GM12878 (cell line): ENCODE measurements at regions of chr9 and their contacts with region 1.

Region 1: GRCh38 chr9:82513242-82513751 is 524.7 kb downstream of the SPATA31D1 start:
- DNase-seq: no peak
- ATAC-seq: no peak
- H3K4me3 ChIP-seq: no peak overlapping the region
- H3K27ac ChIP-seq: no peak overlapping the region
- H3K4me1 ChIP-seq: no peaks in the 10 kb centered on the region
- H3K27me3 ChIP-seq: no peaks in the 10 kb centered on the region
- CTCF ChIP-seq: no peak
- EP300 ChIP-seq: no peak
- POLR2A ChIP-seq: no peak
- RAD21 ChIP-seq: no peak

Region 2: DNA sequence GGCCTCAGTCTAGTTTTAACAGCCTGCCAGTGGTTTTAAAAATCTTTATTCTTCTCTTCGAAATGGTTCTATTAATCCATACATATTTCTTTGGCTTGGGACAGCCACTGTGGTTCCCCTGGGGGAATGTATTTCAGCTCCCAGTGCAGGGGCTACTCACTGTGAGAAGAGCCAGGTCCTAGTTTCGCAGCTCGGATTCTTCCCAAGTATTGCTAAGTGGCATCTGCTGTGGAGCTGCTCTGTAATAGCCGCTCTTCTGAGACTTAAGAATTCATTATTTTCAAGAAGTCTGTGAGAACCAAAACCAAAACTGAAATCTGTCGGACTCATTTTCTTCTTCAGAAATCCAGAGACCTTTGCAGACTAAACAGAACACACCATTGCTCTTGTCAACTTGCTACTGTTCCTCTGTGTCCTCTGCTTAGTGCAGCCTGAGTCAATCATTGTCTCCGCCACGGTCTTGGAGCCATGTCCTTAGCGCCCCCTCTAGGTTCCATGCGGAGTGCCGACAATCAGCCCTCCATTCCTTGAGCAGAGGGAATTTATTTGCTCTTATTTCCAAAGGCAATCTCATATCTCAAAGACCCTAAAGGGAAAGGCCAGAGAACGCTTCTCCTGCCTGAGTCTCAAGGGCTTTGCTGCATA is 46.6 kb before region 1 on chr9:
- CTCF ChIA-PET with region 1: no interaction called
- POLR2A ChIA-PET with region 1: no interaction called
- RAD21 ChIA-PET with region 1: no interaction called
- SMC1A ChIA-PET with region 1: no interaction called
- in situ Hi-C with region 1: loop called (anchors 5 kb)
- intact Hi-C with region 1: no loop called
- DNase-seq: no peak
- ATAC-seq: no peak
- H3K4me3 ChIP-seq: no peak overlapping the region
- H3K27ac ChIP-seq: no peak overlapping the region
- H3K4me1 ChIP-seq: no peaks in the 10 kb centered on the region
- H3K27me3 ChIP-seq: no peaks in the 10 kb centered on the region
- CTCF ChIP-seq: no peak
- EP300 ChIP-seq: no peak
- POLR2A ChIP-seq: no peak
- RAD21 ChIP-seq: peak; percentile 28

Region 3: DNA sequence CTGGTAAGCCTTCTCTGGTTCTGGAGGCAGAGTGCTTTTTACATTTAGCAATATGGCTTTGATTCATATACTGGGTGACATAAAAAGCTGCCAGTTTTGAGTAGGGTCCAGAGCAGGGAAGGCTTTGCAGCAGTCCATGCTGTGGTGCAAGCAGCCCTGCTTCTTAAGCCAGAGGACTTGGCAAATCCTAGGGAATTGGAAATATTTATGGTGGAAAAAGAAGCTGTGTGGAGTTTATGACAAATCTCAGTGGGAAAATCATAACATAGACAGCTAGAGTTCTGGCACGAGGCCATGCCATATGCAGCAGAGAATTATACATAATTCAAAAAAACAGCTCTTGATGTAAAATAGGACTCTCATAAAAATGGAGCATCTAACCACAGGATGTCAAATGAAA is 13.3 kb after region 1 on chr9:
- CTCF ChIA-PET with region 1: no interaction called
- POLR2A ChIA-PET with region 1: no interaction called
- RAD21 ChIA-PET with region 1: no interaction called
- SMC1A ChIA-PET with region 1: no interaction called
- in situ Hi-C with region 1: no loop called
- intact Hi-C with region 1: no loop called
- DNase-seq: no peak
- ATAC-seq: no peak
- H3K4me3 ChIP-seq: no peak overlapping the region
- H3K27ac ChIP-seq: no peak overlapping the region
- H3K4me1 ChIP-seq: no peaks in the 10 kb centered on the region
- H3K27me3 ChIP-seq: no peaks in the 10 kb centered on the region
- CTCF ChIP-seq: no peak
- EP300 ChIP-seq: no peak
- POLR2A ChIP-seq: no peak
- RAD21 ChIP-seq: no peak